A549 (cell line): ENCODE measurements at regions of chr18 and their contacts with region 1.

Region 1: GRCh38 chr18:76709659-76710645 is 112.4 kb upstream of the ZNF236 start:
- DNase-seq: peak; percentile 38 to 58
- ATAC-seq: peak; percentile 85 to 90; a peak in 5 of 6 replicates
- H3K4me3 ChIP-seq: no peak overlapping the region
- H3K27ac ChIP-seq: 0 out of 6 replicates have a peak overlapping the region, but pooled peaks of 1 of the 2 experiments have one; percentile 24
- H3K4me1 ChIP-seq: no peaks in the 10 kb centered on the region
- CTCF ChIP-seq: peak; percentile 81
- EP300 ChIP-seq: no peak
- POLR2A ChIP-seq: no peak
- RAD21 ChIP-seq: peak; percentile 86 to 90

Region 2: GRCh38 chr18:76390452-76391035 is 319.4 kb before region 1 on chr18:
- CTCF ChIA-PET with region 1: interaction called, 101 read pairs
- POLR2A ChIA-PET with region 1: no interaction called
- DNase-seq: no peak
- ATAC-seq: no peak
- H3K4me3 ChIP-seq: no peak overlapping the region
- H3K27ac ChIP-seq: no peak overlapping the region
- H3K4me1 ChIP-seq: no peaks in the 10 kb centered on the region
- CTCF ChIP-seq: no peak
- EP300 ChIP-seq: no peak
- POLR2A ChIP-seq: no peak
- RAD21 ChIP-seq: no peak

Region 3: GRCh38 chr18:76398896-76399612 is 310.9 kb before region 1 on chr18:
- CTCF ChIA-PET with region 1: interaction called, 101 read pairs
- POLR2A ChIA-PET with region 1: interaction called, 4 read pairs
- DNase-seq: peak; percentile 50 to 77
- ATAC-seq: peak; percentile 84 to 92
- H3K4me3 ChIP-seq: no peak overlapping the region
- H3K27ac ChIP-seq: no peak overlapping the region
- H3K4me1 ChIP-seq: no peaks in the 10 kb centered on the region
- CTCF ChIP-seq: peak; percentile 82
- EP300 ChIP-seq: no peak
- POLR2A ChIP-seq: no peak
- RAD21 ChIP-seq: peak; percentile 87 to 90

Region 4: DNA sequence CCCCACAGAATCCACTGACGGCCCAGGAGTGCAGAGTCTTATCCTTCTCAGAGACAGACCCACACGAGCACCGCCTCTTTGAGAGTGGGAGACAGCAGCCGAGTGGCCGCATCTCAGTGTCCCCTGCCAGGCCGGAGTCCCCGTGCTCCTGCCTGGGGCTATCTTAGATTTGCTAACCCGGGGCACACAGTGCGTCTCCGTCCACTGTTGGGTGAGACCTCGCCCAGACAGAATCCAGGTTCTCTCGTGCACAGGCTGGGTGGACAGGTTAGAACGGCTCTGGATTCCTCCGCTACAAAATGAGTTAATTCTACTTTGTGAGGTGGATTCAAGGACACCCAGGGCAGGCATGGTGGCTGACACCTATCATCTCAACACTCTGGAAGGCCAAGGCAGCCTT is 303.2 kb before region 1 on chr18:
- CTCF ChIA-PET with region 1: interaction called, 101 read pairs
- POLR2A ChIA-PET with region 1: no interaction called
- DNase-seq: no peak
- ATAC-seq: no peak
- H3K4me3 ChIP-seq: no peak overlapping the region
- H3K27ac ChIP-seq: no peak overlapping the region
- H3K4me1 ChIP-seq: no peaks in the 10 kb centered on the region
- CTCF ChIP-seq: no peak
- EP300 ChIP-seq: no peak
- POLR2A ChIP-seq: no peak
- RAD21 ChIP-seq: no peak

Region 5: GRCh38 chr18:76697441-76697901 is 12.5 kb before region 1 on chr18:
- CTCF ChIA-PET with region 1: interaction called, 13 read pairs
- POLR2A ChIA-PET with region 1: no interaction called
- DNase-seq: no peak
- ATAC-seq: peak in 1 of 2 experiments; percentile 64; a peak in 3 of 6 replicates
- H3K4me3 ChIP-seq: no peak overlapping the region
- H3K27ac ChIP-seq: no peak overlapping the region
- H3K4me1 ChIP-seq: no peaks in the 10 kb centered on the region
- CTCF ChIP-seq: no peak
- EP300 ChIP-seq: no peak
- POLR2A ChIP-seq: no peak
- RAD21 ChIP-seq: no peak

Region 6: GRCh38 chr18:76741365-76741764 is 31.4 kb after region 1 on chr18:
- CTCF ChIA-PET with region 1: no interaction called
- POLR2A ChIA-PET with region 1: no interaction called
- DNase-seq: no peak
- ATAC-seq: no peak
- H3K4me3 ChIP-seq: no peak overlapping the region
- H3K27ac ChIP-seq: no peak overlapping the region; a peak in 2 of 6 replicates
- H3K4me1 ChIP-seq: peaks cover 9% of the 10 kb centered on the region
- CTCF ChIP-seq: no peak
- EP300 ChIP-seq: no peak
- POLR2A ChIP-seq: no peak
- RAD21 ChIP-seq: no peak

Region 7: DNA sequence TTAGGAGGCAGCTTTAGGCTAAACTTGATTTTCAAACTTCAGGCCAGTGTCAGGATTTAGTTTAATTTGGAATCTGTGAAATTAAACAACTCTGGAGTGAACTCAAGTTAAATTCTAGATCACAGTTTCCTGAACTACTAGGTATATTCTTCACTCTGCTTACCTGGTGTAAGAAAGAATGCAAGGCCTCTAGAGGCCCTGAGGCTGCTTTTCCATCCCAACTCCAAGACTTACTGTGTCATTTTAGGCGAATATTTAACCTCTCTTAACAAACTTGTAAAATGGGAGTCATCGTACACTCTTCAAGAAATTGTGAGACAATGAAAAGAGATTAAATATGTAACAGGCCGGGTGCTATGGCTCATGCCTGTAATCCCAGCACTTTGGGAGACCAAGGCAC is 87.4 kb after region 1 on chr18:
- CTCF ChIA-PET with region 1: no interaction called
- POLR2A ChIA-PET with region 1: no interaction called
- DNase-seq: no peak
- ATAC-seq: no peak
- H3K4me3 ChIP-seq: no peak overlapping the region
- H3K27ac ChIP-seq: no peak overlapping the region
- H3K4me1 ChIP-seq: no peaks in the 10 kb centered on the region
- CTCF ChIP-seq: no peak
- EP300 ChIP-seq: no peak
- POLR2A ChIP-seq: no peak
- RAD21 ChIP-seq: no peak